ENCODE measurements at regions of chr11 and their contacts with region 1.

Region 1: GRCh38 chr11:114036156-114036811 is 23.2 kb upstream of the ZBTB16 start:
- DNase-seq: peak; percentile 88 to 94
- ATAC-seq: peak; percentile 85 to 93 (median 88)
- H3K4me3 ChIP-seq: peak overlapping the region; percentile 66
- H3K27ac ChIP-seq: peak overlapping the region; percentile 75
- H3K4me1 ChIP-seq: peaks cover 40% of the 10 kb centered on the region
- H3K27me3 ChIP-seq: no peaks in the 10 kb centered on the region
- CTCF ChIP-seq: peak; percentile 87

Region 2: DNA sequence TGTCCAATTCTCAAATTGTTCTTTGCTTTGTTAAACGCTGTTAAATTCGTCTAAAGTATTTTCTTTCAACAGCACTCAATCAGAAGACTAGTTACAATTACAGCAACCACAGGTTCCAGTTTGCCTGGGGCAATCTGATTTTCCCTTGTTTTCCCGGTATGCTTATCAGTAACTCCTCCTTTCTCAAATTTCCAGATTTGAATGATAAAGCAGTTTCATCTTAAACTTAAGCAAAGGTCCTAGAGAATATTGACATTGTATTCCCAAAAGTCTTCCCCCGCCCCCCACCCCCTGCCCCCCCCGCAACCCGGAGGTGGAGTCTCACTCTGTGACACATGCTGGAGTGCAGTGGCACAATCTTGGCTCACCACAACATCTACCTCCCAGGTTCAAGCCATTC is 150.4 kb before region 1 on chr11:
- intact Hi-C with region 1: loop called in 1 of 2 experiments (anchors 5 kb)
- DNase-seq: no peak
- ATAC-seq: no peak
- H3K4me3 ChIP-seq: no peak overlapping the region
- H3K27ac ChIP-seq: no peak overlapping the region
- H3K4me1 ChIP-seq: peaks cover 10% of the 10 kb centered on the region
- H3K27me3 ChIP-seq: no peaks in the 10 kb centered on the region
- CTCF ChIP-seq: no peak

Region 3: GRCh38 chr11:114017723-114018122 is 18.6 kb before region 1 on chr11:
- intact Hi-C with region 1: no loop called
- DNase-seq: no peak
- ATAC-seq: peak in 3 of 4 donors; percentile 67 to 83 (median 75)
- H3K4me3 ChIP-seq: no peak overlapping the region
- H3K27ac ChIP-seq: no peak overlapping the region
- H3K4me1 ChIP-seq: no peaks in the 10 kb centered on the region
- H3K27me3 ChIP-seq: no peaks in the 10 kb centered on the region
- CTCF ChIP-seq: no peak

Measured in psoas muscle (tissue), 8 donors.